Mammary epithelial cell (primary cell): ENCODE measurements at regions of chr10 and their contacts with region 1.

Region 1: GRCh38 chr10:110547139-110547761 is 20.2 kb upstream of the SMC3 start:
- DNase-seq: peak; percentile 48
- H3K4me3 ChIP-seq: no peak overlapping the region
- H3K27ac ChIP-seq: no peak overlapping the region
- H3K4me1 ChIP-seq: peaks cover 3% of the 10 kb centered on the region
- H3K27me3 ChIP-seq: peaks cover 2% of the 10 kb centered on the region
- CTCF ChIP-seq: peak; percentile 82 to 83

Region 2: GRCh38 chr10:110304780-110305421 is 242.3 kb before region 1 on chr10 and contains the start of gene SMNDC1:
- CTCF ChIA-PET with region 1: interaction called, 3 read pairs
- dilution Hi-C with region 1: no loop called
- in situ Hi-C with region 1: loop called in 1 of 2 experiments (anchors 10 kb)
- intact Hi-C with region 1: loop called (anchors 1 kb)
- DNase-seq: peak; percentile 96
- H3K4me3 ChIP-seq: peak within 1 kb of the TSS; percentile 69 to 97 (median 95)
- H3K27ac ChIP-seq: peak within 1 kb of the TSS; percentile 86
- H3K4me1 ChIP-seq: peaks cover 19% of the 10 kb centered on the region
- H3K27me3 ChIP-seq: no peaks in the 10 kb centered on the region
- CTCF ChIP-seq: no peak
- total RNA-seq, gene SMNDC1: 6.5 to 42.8 TPM

Region 3: DNA sequence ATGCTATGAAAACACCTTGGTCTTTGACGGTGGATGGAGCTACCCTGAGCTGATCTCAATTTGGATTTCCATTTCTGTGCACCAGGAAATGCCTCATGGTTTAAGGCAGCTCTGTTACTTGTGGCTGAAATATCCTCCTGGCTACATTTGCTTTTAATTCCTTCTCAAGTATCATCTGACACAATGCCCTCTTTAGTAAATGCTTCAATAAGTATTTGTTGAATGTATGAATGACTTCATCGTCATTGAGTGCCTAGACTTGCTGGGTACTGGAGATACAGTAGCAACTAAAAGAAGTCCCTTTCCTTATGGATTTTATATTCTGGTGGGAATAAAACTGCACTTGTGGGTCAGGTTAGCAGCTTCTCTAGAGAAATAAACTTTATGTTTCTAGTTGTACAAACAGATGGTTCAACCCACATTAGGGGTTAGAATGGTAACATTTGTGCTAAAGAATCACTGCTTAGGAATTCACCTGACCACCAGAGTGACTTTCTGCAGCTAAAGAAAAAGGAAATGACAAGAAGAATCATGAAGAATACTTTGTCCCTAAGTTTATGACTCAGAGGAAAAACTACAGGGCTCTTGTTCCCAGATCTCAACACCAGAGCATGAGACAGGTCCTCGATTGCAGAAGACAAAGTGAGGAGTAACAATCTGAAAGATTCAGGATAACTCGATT is 220.8 kb before region 1 on chr10:
- CTCF ChIA-PET with region 1: no interaction called
- dilution Hi-C with region 1: loop called (anchors 10 kb)
- in situ Hi-C with region 1: no loop called
- intact Hi-C with region 1: no loop called
- DNase-seq: peak; percentile 80
- H3K4me3 ChIP-seq: no peak overlapping the region
- H3K27ac ChIP-seq: peak overlapping the region; percentile 40
- H3K4me1 ChIP-seq: peaks cover 41% of the 10 kb centered on the region
- H3K27me3 ChIP-seq: no peaks in the 10 kb centered on the region
- CTCF ChIP-seq: no peak

Region 4: DNA sequence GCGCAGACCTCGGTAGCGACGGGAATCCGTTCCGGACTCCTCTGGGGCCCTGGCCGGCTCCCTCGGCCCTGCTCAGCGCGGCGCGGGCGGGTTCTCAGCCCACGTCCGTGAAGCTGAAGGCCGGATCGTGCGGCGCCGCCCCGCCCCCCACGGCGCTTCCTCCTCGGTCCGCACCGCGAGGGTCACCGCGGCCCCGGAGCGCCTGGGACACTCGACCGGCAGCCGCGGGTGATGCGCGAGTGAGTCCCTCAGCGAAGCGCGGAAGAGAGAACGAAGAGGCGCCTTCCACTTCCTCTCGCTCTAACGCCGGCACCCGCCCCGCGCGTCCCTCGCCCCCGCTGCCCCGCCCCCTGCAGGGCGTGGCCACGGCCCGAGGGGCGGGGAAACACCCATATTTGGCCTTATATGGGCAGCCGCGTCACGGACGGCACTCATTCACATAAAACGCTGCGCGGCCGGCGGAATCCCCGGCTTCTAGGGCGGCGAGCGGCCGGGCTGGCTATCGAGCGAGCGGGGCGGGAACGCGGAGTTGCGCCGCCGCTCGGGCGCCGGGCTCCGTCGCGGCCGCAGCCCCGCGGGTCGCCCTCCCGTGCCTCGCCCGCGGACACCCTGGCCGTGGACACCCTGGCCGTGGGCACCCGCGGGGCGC is 49.7 kb before region 1 on chr10 and contains the start of gene DUSP5:
- CTCF ChIA-PET with region 1: no interaction called
- dilution Hi-C with region 1: no loop called
- in situ Hi-C with region 1: no loop called
- intact Hi-C with region 1: loop called (anchors 1 kb)
- DNase-seq: peak; percentile 96
- H3K4me3 ChIP-seq: peak within 1 kb of the TSS; percentile 80 to 90 (median 82)
- H3K27ac ChIP-seq: peak within 1 kb of the TSS; percentile 92
- H3K4me1 ChIP-seq: peaks cover 49% of the 10 kb centered on the region
- H3K27me3 ChIP-seq: no peaks in the 10 kb centered on the region
- CTCF ChIP-seq: no peak
- total RNA-seq, gene DUSP5: 18.0 to 107 TPM

Region 5: GRCh38 chr10:110600487-110601101 is 53.3 kb after region 1 on chr10:
- CTCF ChIA-PET with region 1: no interaction called
- dilution Hi-C with region 1: no loop called
- in situ Hi-C with region 1: no loop called
- intact Hi-C with region 1: loop called (anchors 2 kb)
- DNase-seq: peak; percentile 43
- H3K4me3 ChIP-seq: no peak overlapping the region
- H3K27ac ChIP-seq: no peak overlapping the region
- H3K4me1 ChIP-seq: no peaks in the 10 kb centered on the region
- H3K27me3 ChIP-seq: no peaks in the 10 kb centered on the region
- CTCF ChIP-seq: peak; percentile 52 to 58

Region 6: DNA sequence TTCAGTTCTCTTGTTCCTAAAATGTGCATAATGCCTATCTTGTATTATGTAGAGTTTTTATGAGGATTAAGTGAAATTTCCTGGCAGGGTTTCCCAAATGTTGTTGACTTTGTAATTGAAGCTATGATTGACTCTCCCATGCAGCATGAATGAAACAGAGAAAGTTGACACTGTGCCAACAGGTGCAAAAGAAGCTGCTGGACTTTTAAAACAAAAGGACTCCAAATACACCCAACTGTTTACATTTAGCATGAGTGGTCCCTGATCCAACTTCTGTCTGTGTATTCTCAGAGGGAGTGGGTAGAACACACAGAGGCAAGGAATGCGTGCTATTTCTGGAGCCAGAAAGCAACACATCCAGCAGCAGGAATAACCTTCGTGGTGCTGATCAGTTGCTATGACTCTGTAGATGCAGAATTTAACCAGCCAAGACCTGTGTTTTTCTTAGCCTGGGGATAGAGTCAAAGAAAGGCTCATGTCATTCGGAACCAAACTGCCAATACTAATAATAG is 82.5 kb after region 1 on chr10:
- CTCF ChIA-PET with region 1: no interaction called
- dilution Hi-C with region 1: no loop called
- in situ Hi-C with region 1: no loop called
- intact Hi-C with region 1: no loop called
- DNase-seq: peak; percentile 80
- H3K4me3 ChIP-seq: no peak overlapping the region
- H3K27ac ChIP-seq: no peak overlapping the region
- H3K4me1 ChIP-seq: peaks cover 20% of the 10 kb centered on the region
- H3K27me3 ChIP-seq: no peaks in the 10 kb centered on the region
- CTCF ChIP-seq: no peak